BJ (cell line): ENCODE measurements at regions of chr1 and their contacts with region 1.

Region 1: GRCh38 chr1:170685166-170685565 is 21.2 kb downstream of the PRRX1 start:
- DNase-seq: peak; percentile 59
- H3K4me3 ChIP-seq: no peak overlapping the region
- H3K27me3 ChIP-seq: no peaks in the 10 kb centered on the region
- CTCF ChIP-seq: no peak

Region 2: GRCh38 chr1:170707959-170708655 is 22.9 kb after region 1 on chr1:
- CTCF ChIA-PET with region 1: interaction called, 15 read pairs
- POLR2A ChIA-PET with region 1: interaction called, 14 read pairs
- DNase-seq: peak; percentile 98
- H3K4me3 ChIP-seq: no peak overlapping the region
- H3K27me3 ChIP-seq: no peaks in the 10 kb centered on the region
- CTCF ChIP-seq: no peak